ENCODE measurements at regions of chr7 and their contacts with region 1.

Region 1: DNA sequence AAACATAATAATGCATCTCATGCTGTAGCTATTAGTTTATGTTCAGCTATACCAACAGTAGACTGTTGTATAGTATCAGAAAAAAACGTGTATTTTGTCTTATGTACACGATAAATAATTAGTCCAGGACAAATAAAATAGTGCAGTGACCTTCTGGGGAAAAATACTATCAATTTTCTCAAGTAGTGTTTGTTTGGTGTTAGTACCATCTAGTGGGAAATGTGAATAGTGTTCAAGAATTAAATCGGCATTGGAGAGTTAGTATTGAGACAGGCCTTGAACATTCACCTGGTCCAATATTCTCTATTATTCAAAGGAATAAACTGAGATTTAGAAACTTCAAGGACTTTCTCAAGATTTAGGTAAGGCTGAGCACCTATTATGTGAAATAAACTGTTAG is 21.7 kb upstream of the OR2A5 start:
- DNase-seq: no peak
- ATAC-seq: no peak
- H3K4me3 Mint-ChIP-seq: no peak overlapping the region
- H3K27ac Mint-ChIP-seq: no peak overlapping the region
- H3K4me1 Mint-ChIP-seq: peaks cover 7% of the 10 kb centered on the region
- H3K27me3 Mint-ChIP-seq: peaks cover 8% of the 10 kb centered on the region
- CTCF ChIP-seq: no peak

Region 2: GRCh38 chr7:144086730-144087129 is 59.7 kb after region 1 on chr7:
- CTCF ChIA-PET with region 1: no interaction called
- POLR2A ChIA-PET with region 1: no interaction called
- intact Hi-C with region 1: loop called (anchors 10 kb)
- DNase-seq: no peak
- ATAC-seq: no peak
- H3K4me3 Mint-ChIP-seq: no peak overlapping the region
- H3K27ac Mint-ChIP-seq: no peak overlapping the region
- H3K4me1 Mint-ChIP-seq: no peaks in the 10 kb centered on the region
- H3K27me3 Mint-ChIP-seq: peaks cover 8% of the 10 kb centered on the region
- CTCF ChIP-seq: no peak